ENCODE measurements at regions of chr15 and their contacts with region 1.

Region 1: GRCh38 chr15:80970018-80970658 is 19.5 kb downstream of the MESD start:
- DNase-seq: peak; percentile 28
- H3K4me3 Mint-ChIP-seq: no peak overlapping the region
- H3K27ac Mint-ChIP-seq: no peak overlapping the region
- H3K4me1 Mint-ChIP-seq: no peaks in the 10 kb centered on the region
- H3K27me3 Mint-ChIP-seq: no peaks in the 10 kb centered on the region

Region 2: GRCh38 chr15:80455668-80456442 is 514.3 kb before region 1 on chr15:
- intact Hi-C with region 1: loop called (anchors 1 kb)
- DNase-seq: peak; percentile 25
- H3K4me3 Mint-ChIP-seq: no peak overlapping the region
- H3K27ac Mint-ChIP-seq: no peak overlapping the region
- H3K4me1 Mint-ChIP-seq: peaks cover 4% of the 10 kb centered on the region
- H3K27me3 Mint-ChIP-seq: peaks cover 7% of the 10 kb centered on the region

Region 3: DNA sequence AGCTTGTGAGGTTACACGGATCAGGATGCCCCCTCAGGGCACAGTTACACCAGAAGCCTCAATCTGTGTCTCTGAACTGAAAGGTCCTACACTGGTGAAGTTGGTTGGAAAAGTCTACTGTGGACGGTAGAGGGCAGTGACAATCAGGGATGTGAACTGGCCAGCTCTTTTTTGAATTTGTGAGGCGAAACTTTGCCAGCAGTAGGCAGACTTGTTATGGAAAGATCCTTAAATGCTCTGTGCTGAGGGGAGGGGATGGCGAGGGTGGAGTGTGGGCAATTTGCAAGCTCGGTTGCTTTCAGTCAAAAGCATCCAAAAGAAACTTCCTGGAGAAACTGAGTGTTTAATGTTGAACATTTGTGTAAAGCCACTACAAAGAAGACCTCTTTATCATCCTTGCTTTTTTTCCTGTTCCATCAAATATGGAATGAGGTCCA is 402.4 kb before region 1 on chr15:
- intact Hi-C with region 1: loop called (anchors 1 kb)
- DNase-seq: no peak
- H3K4me3 Mint-ChIP-seq: no peak overlapping the region
- H3K27ac Mint-ChIP-seq: no peak overlapping the region
- H3K4me1 Mint-ChIP-seq: no peaks in the 10 kb centered on the region
- H3K27me3 Mint-ChIP-seq: peaks cover 9% of the 10 kb centered on the region

Region 4: GRCh38 chr15:80755885-80756284 is 214.3 kb before region 1 on chr15:
- intact Hi-C with region 1: no loop called
- DNase-seq: no peak
- H3K4me3 Mint-ChIP-seq: no peak overlapping the region
- H3K27ac Mint-ChIP-seq: no peak overlapping the region
- H3K4me1 Mint-ChIP-seq: peaks cover 5% of the 10 kb centered on the region
- H3K27me3 Mint-ChIP-seq: peaks cover 4% of the 10 kb centered on the region

Measured in activated T-helper 1 cell treated with anti-CD3 and anti-CD28 coated beads, Interleukin-12 subunit alpha, Interleukin-12 subunit beta, Interleukin-2, Interleukin-4 antibody, amounts not matched to agents 30 ng/mL and 10 ng/mL and 1 ng/mL, durations not matched to agents 14 hours and 24 hours and 36 hours (primary cell).